ENCODE measurements at regions of chr5 and their contacts with region 1.

Region 1: DNA sequence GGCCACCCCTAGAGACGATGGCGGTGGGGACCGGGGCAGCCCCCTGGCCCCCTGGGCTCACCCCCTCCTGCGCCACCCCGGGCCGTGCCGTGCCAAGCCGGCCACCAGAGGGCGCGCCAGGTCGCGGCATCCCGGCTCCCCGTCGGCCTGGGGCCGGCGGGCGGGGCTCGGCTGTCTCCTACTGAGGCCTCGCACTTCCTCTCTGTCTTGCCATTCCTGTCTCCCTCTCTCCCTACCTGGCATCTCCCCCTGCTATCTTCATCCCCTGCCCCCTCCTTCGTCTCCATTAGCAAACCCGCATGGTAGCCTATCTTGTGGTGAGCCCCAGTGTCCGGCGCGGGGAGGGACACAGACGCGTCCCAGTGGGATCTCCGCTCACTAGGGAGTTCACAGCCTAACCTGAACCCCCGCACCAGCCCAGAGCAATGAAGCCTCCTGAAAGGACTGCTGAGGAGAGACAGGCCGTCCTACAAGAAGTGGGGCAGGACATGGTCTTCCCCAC is 29.8 kb upstream of the FABP6 start:
- DNase-seq: peak; percentile 79
- H3K4me3 ChIP-seq: peak overlapping the region in 3 of 4 donors; percentile 40 to 50 (median 49)
- H3K27ac ChIP-seq: no peak overlapping the region
- H3K4me1 ChIP-seq: peaks cover 0 to 11% (median 7%) of the 10 kb centered on the region in 4 donors
- H3K27me3 ChIP-seq: no peaks in the 10 kb centered on the region
- CTCF ChIP-seq: peak in 3 of 4 experiments; percentile 44 to 96 (median 62)
- EP300 ChIP-seq: no peak
- POLR2A ChIP-seq: no peak

Region 2: DNA sequence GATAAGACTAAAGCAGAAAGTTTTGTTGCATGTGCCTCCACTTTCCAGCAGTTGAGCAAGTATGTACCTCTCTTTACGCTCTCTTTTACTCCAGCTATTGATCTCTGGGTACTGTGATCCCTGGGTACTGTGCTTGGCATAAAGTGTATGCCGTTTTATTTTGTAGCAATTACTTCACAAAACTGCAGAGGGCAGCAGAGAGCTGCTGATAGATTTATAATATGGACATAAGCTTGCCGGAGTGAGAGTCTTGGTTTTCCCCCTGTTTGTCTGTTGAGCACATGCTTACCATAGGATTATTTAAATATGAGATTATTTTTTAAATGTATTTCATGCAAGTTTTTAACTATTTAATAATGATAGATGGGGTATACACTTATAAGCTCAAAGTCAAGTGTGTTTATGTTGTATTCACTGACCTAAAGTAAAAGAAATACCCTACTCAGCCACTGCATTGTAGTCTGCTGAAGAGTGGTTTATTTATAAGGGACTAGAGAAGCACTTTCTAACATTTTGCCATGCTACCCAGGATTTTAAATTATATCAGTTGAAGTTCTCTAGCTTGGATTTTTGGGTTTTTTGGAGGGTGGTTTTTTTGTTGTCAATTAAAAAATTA is 177.5 kb before region 1 on chr5:
- intact Hi-C with region 1: loop called (anchors 5 kb)
- DNase-seq: no peak
- H3K4me3 ChIP-seq: no peak overlapping the region
- H3K27ac ChIP-seq: no peak overlapping the region
- H3K4me1 ChIP-seq: peaks cover 0 to 18% (median 8%) of the 10 kb centered on the region in 4 donors
- H3K27me3 ChIP-seq: no peaks in the 10 kb centered on the region
- CTCF ChIP-seq: peak; percentile 61 to 78 (median 74)
- EP300 ChIP-seq: no peak
- POLR2A ChIP-seq: no peak

Region 3: DNA sequence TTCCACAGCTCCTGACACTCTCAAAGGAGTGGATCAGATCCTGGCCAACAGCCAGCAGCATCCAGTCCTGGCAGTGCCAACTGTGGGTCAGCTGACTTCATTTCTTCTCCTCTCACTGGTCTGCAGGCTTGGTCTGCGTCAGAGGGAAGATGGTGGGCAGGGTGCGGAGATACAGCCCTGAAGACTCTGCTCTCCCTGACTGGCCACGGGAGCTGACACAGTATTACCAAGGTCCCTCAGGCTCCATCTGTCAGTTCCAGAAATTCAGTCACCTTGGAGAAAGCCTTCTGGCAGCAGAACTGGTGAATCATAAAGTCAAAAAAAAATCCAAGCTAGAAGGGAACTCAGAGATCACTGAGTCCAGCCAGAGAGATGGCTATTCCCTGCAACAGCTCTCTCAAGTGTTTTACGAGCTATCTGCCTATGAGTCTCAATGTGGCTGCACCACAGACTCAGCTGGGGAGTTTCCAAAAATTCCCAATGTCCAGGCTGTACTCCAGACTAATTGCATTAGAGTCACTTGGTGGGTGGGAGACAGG is 143.0 kb after region 1 on chr5:
- intact Hi-C with region 1: loop called (anchors 1 kb)
- DNase-seq: peak; percentile 60
- H3K4me3 ChIP-seq: no peak overlapping the region
- H3K27ac ChIP-seq: no peak overlapping the region
- H3K4me1 ChIP-seq: peaks cover 0 to 5% (median 4%) of the 10 kb centered on the region in 4 donors
- H3K27me3 ChIP-seq: no peaks in the 10 kb centered on the region
- CTCF ChIP-seq: no peak
- EP300 ChIP-seq: no peak
- POLR2A ChIP-seq: no peak

Region 4: DNA sequence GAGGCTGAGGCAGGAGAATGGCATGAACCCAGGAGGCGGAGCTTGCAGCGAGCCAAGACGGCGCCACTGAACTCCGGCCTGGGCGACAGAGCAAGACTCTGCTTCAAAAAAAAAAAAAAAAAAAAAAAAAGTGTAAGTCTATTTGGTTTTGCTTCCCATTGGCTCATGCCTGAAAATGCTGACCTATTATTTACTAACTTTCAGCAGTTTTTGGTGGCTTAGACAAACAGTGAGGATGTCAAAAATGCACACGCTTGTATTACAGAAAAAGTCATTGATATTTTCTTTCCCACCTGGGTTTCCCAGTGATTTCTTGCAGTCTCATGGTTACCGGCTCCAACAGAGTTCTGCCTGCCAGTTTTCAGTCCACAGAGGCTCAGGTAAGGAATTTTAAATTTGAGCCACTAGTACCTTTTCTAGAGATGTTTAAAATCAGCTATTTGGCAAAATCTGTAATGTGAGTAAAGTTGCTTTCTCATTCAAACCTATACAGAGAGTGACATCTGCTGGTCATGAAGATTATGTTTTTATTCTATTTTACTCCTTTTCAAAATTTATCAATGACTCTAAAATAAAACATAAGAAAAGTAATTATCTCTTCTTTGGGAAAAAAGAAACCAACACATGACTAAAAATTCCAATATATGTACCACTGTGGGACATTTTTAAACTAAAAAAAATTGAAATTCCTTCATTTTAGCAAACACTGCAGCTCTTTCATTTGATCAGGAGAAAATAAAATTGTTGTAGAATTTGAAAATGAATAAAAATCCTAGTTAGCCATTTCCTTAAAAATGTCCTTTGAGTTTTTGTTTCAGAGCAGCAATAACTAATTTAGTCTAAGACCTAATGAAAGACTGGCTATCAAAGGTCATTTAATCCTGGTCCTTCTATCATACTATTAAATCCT is 191.6 kb after region 1 on chr5:
- intact Hi-C with region 1: loop called (anchors 2 kb)
- DNase-seq: no peak
- H3K4me3 ChIP-seq: no peak overlapping the region
- H3K27ac ChIP-seq: no peak overlapping the region
- H3K4me1 ChIP-seq: peaks cover 0 to 25% (median 9%) of the 10 kb centered on the region in 4 donors
- H3K27me3 ChIP-seq: no peaks in the 10 kb centered on the region
- CTCF ChIP-seq: peak in 1 of 4 experiments; percentile 31
- EP300 ChIP-seq: no peak
- POLR2A ChIP-seq: no peak